Ovary (tissue), 10 donors: ENCODE measurements at regions of chr9 and their contacts with region 1.

Region 1: GRCh38 chr9:93962561-93963440 is 7.6 kb upstream of the BARX1 start:
- DNase-seq: peak; percentile 60 to 80 (median 78)
- H3K4me3 ChIP-seq: no peak overlapping the region
- H3K27ac ChIP-seq: no peak overlapping the region
- H3K4me1 ChIP-seq: peaks cover 3% of the 10 kb centered on the region
- H3K27me3 ChIP-seq: no peaks in the 10 kb centered on the region
- CTCF ChIP-seq: peak; percentile 49 to 62 (median 59)
- EP300 ChIP-seq: no peak
- POLR2A ChIP-seq: no peak

Region 2: GRCh38 chr9:93159601-93160471 is 803.0 kb before region 1 on chr9:
- intact Hi-C with region 1: loop called in 1 of 4 experiments (anchors 10 kb)
- DNase-seq: peak; percentile 72 to 88 (median 85)
- H3K4me3 ChIP-seq: no peak overlapping the region
- H3K27ac ChIP-seq: no peak overlapping the region
- H3K4me1 ChIP-seq: peaks cover 7% of the 10 kb centered on the region
- H3K27me3 ChIP-seq: no peaks in the 10 kb centered on the region
- CTCF ChIP-seq: peak; percentile 74 to 89 (median 88)
- EP300 ChIP-seq: no peak
- POLR2A ChIP-seq: no peak

Region 3: DNA sequence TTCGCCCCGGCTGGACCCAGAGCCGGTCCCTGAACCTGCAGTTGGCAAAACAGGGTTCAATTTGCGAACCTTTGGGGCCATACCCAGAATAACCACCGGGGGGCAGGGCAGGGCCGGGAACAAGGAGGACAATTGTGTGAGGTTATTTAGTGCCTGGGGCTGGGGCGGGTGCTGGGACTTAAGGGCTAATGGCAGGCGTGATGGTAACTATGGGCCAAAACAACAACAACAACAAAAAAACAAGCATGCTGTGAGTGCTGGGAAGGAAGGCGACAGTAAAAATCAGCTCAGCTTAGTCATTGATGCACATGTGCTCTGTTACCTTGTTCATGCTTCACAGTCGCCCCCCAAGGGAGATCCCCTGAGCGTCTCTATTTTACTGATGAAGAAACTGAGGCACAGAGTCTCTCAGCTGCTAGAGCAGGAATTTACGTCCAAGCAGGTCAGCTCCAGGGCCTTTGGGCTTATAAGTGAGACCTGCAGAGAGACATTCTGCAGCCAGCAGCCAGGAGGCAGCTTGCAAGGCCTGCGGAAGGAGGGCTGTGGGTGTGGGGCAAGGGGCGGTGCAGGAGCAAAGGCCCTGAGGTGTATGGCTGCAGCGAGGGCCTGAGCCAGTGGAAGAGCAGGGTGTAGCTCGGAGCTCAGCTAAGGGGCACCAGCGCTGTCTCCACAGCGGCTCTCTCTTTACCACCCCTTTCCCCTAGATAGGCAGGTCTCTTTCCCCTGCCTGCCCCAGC is 280.4 kb before region 1 on chr9:
- intact Hi-C with region 1: loop called in 2 of 4 experiments (anchors 5 to 10 kb)
- DNase-seq: peak in 4 of 5 donors; percentile 19 to 67 (median 52)
- H3K4me3 ChIP-seq: no peak overlapping the region
- H3K27ac ChIP-seq: no peak overlapping the region
- H3K4me1 ChIP-seq: no peaks in the 10 kb centered on the region
- H3K27me3 ChIP-seq: no peaks in the 10 kb centered on the region
- CTCF ChIP-seq: peak; percentile 15 to 32 (median 24)
- EP300 ChIP-seq: no peak
- POLR2A ChIP-seq: no peak

Region 4: DNA sequence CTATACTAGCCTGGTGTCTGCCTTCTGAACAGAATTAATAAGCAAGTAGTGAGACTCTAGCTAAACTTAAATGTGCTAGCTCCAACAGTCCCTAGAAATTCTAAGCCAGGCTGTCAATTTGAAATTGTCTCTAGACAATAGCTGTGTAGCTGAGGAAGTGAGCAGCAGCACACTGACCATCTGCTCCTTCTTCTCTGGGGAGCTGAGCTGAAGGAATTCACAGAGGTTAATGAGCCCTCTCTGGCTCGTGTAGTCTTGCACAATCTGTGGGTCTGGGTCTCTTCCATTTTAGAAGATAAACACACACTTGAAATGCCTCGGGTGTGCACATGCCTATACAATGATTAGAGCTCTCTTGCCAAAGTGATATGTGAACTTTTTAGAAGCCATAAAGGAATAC is 55.8 kb after region 1 on chr9:
- intact Hi-C with region 1: no loop called
- DNase-seq: no peak
- H3K4me3 ChIP-seq: no peak overlapping the region
- H3K27ac ChIP-seq: no peak overlapping the region
- H3K4me1 ChIP-seq: no peaks in the 10 kb centered on the region
- H3K27me3 ChIP-seq: no peaks in the 10 kb centered on the region
- CTCF ChIP-seq: no peak
- EP300 ChIP-seq: no peak
- POLR2A ChIP-seq: no peak